Kidney (tissue), 22 donors: ENCODE measurements at regions of chr17 and their contacts with region 1.

Region 1: GRCh38 chr17:1629647-1630310 is 1.1 kb upstream of the SLC43A2 start:
- DNase-seq: peak in 3 of 5 donors; percentile 65 to 88 (median 78)
- H3K4me3 ChIP-seq: peak overlapping the region; percentile 39 to 88 (median 65)
- H3K27ac ChIP-seq: peak overlapping the region; percentile 91 to 93
- H3K4me1 ChIP-seq: peaks cover 0 to 21% (median 14%) of the 10 kb centered on the region in 3 donors
- H3K27me3 ChIP-seq: no peaks in the 10 kb centered on the region
- CTCF ChIP-seq: peak; percentile 59

Region 2: GRCh38 chr17:1503699-1504098 is 126.1 kb before region 1 on chr17:
- intact Hi-C with region 1: no loop called
- DNase-seq: no peak
- H3K4me3 ChIP-seq: no peak overlapping the region
- H3K27ac ChIP-seq: no peak overlapping the region
- H3K4me1 ChIP-seq: no peaks in the 10 kb centered on the region
- H3K27me3 ChIP-seq: no peaks in the 10 kb centered on the region
- CTCF ChIP-seq: no peak

Region 3: GRCh38 chr17:1573916-1574696 is 55.7 kb before region 1 on chr17:
- intact Hi-C with region 1: loop called (anchors 10 kb)
- DNase-seq: peak; percentile 85 to 95 (median 91)
- H3K4me3 ChIP-seq: no peak overlapping the region
- H3K27ac ChIP-seq: peak overlapping the region in 1 of 2 donors; percentile 30
- H3K4me1 ChIP-seq: peaks cover 0 to 19% (median 0%) of the 10 kb centered on the region in 3 donors
- H3K27me3 ChIP-seq: no peaks in the 10 kb centered on the region
- CTCF ChIP-seq: peak; percentile 91